Activated naive CD4-positive, alpha-beta T cell treated with anti-CD3 and anti-CD28 coated beads for 36 hours (primary cell): ENCODE measurements at regions of chr6 and their contacts with region 1.

Region 1: GRCh38 chr6:155154158-155154830 is 109.5 kb upstream of the CLDN20 start:
- DNase-seq: peak; percentile 42
- H3K4me3 Mint-ChIP-seq: no peak overlapping the region
- H3K27ac Mint-ChIP-seq: peak overlapping the region; percentile 89
- H3K4me1 Mint-ChIP-seq: peaks cover 70% of the 10 kb centered on the region
- H3K27me3 Mint-ChIP-seq: no peaks in the 10 kb centered on the region

Region 2: GRCh38 chr6:154773610-154774089 is 380.6 kb before region 1 on chr6:
- CTCF ChIA-PET with region 1: no interaction called
- intact Hi-C with region 1: loop called (anchors 5 kb)
- DNase-seq: peak; percentile 19
- H3K4me3 Mint-ChIP-seq: no peak overlapping the region
- H3K27ac Mint-ChIP-seq: peak overlapping the region; percentile 70
- H3K4me1 Mint-ChIP-seq: peaks cover 43% of the 10 kb centered on the region
- H3K27me3 Mint-ChIP-seq: no peaks in the 10 kb centered on the region

Region 3: GRCh38 chr6:155050311-155050710 is 104.0 kb before region 1 on chr6:
- CTCF ChIA-PET with region 1: interaction called, 6 read pairs
- intact Hi-C with region 1: loop called (anchors 1 kb)
- DNase-seq: peak; percentile 63
- H3K4me3 Mint-ChIP-seq: no peak overlapping the region
- H3K27ac Mint-ChIP-seq: peak overlapping the region; percentile 79
- H3K4me1 Mint-ChIP-seq: peaks cover 25% of the 10 kb centered on the region
- H3K27me3 Mint-ChIP-seq: peaks cover 8% of the 10 kb centered on the region

Region 4: GRCh38 chr6:155103816-155104366 is 50.4 kb before region 1 on chr6:
- CTCF ChIA-PET with region 1: no interaction called
- intact Hi-C with region 1: no loop called
- DNase-seq: peak; percentile 17
- H3K4me3 Mint-ChIP-seq: no peak overlapping the region
- H3K27ac Mint-ChIP-seq: no peak overlapping the region
- H3K4me1 Mint-ChIP-seq: peaks cover 21% of the 10 kb centered on the region
- H3K27me3 Mint-ChIP-seq: peaks cover 7% of the 10 kb centered on the region

Region 5: GRCh38 chr6:155115893-155116570 is 38.3 kb before region 1 on chr6:
- CTCF ChIA-PET with region 1: no interaction called
- intact Hi-C with region 1: loop called (anchors 1 kb)
- DNase-seq: no peak
- H3K4me3 Mint-ChIP-seq: no peak overlapping the region
- H3K27ac Mint-ChIP-seq: peak overlapping the region; percentile 37
- H3K4me1 Mint-ChIP-seq: peaks cover 15% of the 10 kb centered on the region
- H3K27me3 Mint-ChIP-seq: peaks cover 7% of the 10 kb centered on the region

Region 6: DNA sequence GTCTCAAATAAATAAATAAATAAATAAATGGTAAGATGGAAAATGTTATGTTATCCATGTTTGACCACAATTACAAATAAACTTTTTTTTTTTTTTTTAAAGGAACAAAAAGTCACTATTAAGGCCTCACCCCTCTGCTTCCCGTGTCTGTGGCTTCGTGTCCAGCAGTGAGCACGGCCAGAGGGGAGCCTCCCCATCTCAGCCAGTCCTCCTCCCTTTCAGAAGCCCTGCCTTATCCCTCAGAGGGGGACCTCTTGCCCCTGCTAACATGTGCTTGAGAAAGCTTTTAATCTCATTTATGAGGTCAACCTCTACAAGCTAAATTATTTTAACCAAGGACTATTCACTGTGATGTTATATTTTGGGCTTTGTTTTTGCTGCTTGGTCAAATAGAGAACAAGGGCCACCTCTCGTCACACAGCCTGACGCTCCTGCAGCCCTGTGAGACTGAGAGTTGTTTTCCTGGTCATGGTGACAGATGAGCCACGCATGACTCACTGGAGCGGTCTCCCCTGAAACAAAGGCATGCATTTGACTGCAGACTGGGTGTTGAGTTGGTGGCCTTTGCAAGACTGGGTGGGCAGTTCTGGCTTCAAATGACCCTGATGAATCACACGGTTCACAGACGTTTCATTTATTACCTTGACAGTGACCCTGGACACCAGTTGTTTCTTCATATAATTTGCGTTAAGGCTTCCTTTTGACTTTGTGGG is 27.4 kb before region 1 on chr6:
- CTCF ChIA-PET with region 1: no interaction called
- intact Hi-C with region 1: no loop called
- DNase-seq: peak; percentile 55
- H3K4me3 Mint-ChIP-seq: no peak overlapping the region
- H3K27ac Mint-ChIP-seq: no peak overlapping the region
- H3K4me1 Mint-ChIP-seq: peaks cover 23% of the 10 kb centered on the region
- H3K27me3 Mint-ChIP-seq: no peaks in the 10 kb centered on the region

Region 7: GRCh38 chr6:155188707-155189496 is 34.6 kb after region 1 on chr6:
- CTCF ChIA-PET with region 1: no interaction called
- intact Hi-C with region 1: loop called (anchors 1 kb)
- DNase-seq: no peak
- H3K4me3 Mint-ChIP-seq: no peak overlapping the region
- H3K27ac Mint-ChIP-seq: no peak overlapping the region
- H3K4me1 Mint-ChIP-seq: peaks cover 50% of the 10 kb centered on the region
- H3K27me3 Mint-ChIP-seq: no peaks in the 10 kb centered on the region

Region 8: GRCh38 chr6:155201461-155202226 is 47.4 kb after region 1 on chr6:
- CTCF ChIA-PET with region 1: no interaction called
- intact Hi-C with region 1: no loop called
- DNase-seq: no peak
- H3K4me3 Mint-ChIP-seq: no peak overlapping the region
- H3K27ac Mint-ChIP-seq: no peak overlapping the region
- H3K4me1 Mint-ChIP-seq: peaks cover 2% of the 10 kb centered on the region
- H3K27me3 Mint-ChIP-seq: peaks cover 4% of the 10 kb centered on the region